GM23248 (cell line): ENCODE measurements at regions of chr14 and their contacts with region 1.

Region 1: DNA sequence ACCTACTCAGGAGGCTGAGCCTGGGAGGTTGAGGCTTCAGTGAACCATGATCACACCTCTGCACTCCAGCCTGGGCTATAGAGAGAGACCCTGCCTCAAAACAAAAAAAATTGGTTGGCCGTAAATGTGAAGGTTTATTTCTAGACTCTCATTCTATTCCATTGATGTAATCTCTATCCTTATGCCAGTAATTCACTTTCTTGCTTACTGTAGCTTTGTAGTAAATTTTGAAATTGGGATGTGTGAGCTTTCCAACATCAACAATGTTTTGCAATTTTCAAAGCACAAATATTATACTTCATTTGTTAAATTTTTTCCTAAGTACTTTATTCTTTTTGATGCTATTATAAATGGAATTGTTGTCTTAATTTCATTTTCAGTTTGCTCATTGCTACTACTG is 24.6 kb downstream of the LIN52 start:
- DNase-seq: no peak
- H3K4me3 ChIP-seq: no peak overlapping the region
- H3K27ac ChIP-seq: no peak overlapping the region
- H3K4me1 ChIP-seq: no peaks in the 10 kb centered on the region
- H3K27me3 ChIP-seq: no peaks in the 10 kb centered on the region

Region 2: DNA sequence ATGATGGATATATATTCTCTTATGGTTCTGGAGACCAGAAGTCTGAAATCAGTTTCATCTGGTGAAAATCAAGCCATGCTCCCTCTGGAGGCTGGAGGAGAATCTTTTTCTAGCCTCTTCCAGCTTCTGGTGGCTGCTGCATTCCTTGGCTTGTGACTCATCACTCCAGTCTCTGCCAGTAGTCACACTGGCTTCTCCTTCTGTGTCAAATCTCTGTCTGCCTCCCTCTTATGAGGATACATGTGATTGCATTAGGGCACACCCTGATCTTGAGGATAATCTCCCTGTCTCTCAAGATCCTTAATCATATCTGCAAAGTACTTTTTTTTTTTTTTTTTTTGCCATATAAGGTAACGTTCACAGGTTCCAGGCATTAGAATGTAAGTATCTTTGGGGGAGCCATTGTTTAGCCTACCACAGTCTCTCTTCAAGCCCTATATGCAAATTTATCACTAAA is 446.9 kb before region 1 on chr14:
- in situ Hi-C with region 1: no loop called
- DNase-seq: peak; percentile 96
- H3K4me3 ChIP-seq: no peak overlapping the region
- H3K27ac ChIP-seq: peak overlapping the region; percentile 36
- H3K4me1 ChIP-seq: peaks cover 13% of the 10 kb centered on the region
- H3K27me3 ChIP-seq: no peaks in the 10 kb centered on the region

Region 3: DNA sequence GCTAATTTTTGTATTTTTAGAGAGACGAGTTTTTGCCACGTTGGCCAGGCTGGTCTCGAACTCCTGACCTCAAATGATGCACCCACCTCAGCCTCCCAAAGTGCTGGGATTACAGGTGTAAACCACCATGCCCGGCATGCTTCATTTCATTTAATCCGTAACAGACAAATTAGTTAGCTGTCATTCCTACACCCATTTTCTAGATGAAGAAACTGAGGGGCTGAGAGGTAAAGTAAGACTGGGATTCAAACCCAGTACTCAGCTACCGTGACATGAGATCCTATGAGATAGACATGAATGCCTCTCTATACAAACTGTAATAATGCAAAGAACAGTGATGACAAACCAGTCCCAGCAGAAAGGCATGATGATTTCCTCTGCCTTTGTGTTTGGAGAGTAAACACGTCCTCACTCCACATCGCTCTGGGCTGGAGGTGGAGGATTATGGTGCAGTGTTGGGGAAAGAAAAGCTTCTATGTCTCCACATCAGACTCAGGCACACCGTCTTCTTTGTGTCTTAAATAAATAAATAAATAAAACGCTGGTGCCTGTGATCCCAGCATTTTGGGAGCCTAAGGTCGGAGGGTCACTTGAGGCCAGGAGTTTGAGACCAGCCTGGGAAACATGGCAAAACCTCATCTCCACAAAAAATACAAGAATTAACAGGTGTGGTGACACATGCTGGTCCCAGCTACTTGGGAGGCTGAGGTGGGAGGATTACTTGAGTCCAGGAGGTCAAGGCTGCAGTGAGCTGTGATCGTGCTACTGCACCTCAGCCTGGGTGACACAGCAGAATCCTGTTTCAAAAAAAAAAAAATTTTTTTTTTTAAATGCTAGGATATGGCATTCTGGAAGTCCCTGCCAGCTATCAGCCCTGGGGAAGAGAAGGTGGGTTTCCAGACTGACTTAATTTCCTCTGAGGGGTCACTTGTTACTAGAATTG is 140.3 kb after region 1 on chr14:
- in situ Hi-C with region 1: loop called (anchors 5 kb)
- DNase-seq: no peak
- H3K4me3 ChIP-seq: no peak overlapping the region
- H3K27ac ChIP-seq: no peak overlapping the region
- H3K4me1 ChIP-seq: no peaks in the 10 kb centered on the region
- H3K27me3 ChIP-seq: peaks cover 37% of the 10 kb centered on the region

Region 4: DNA sequence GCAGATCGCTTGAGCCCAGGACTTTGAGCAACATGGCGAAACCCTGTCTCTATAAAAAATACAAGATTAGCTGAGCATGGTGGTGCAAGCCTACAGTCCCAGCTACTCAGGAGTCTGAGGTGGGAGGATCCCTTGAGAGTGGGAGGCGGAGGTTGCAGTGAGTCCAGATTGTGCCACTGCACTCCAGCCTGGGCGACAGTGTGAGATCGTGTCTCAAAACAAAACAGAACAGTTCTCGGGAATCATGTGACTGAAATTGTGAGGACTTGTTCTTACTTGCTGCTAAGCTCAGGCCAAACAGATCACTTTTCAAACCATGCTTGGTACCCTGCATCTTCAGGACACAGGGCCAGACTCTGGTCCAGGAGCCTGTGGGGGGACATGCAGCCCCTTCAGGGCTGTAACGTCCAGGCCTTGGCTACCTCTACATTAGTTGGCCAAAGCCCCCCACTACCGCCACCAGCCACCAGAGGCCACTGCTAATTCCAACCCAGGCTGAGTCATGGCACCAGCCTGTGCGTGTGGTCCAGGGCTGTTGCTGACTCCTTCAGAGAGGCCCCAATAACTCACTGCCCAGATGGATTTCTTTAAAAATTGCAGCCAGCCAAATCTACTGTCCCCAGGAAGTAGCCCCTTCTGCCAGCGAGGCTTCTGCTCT is 350.0 kb after region 1 on chr14:
- in situ Hi-C with region 1: loop called (anchors 25 kb)
- DNase-seq: peak; percentile 93
- H3K4me3 ChIP-seq: no peak overlapping the region
- H3K27ac ChIP-seq: no peak overlapping the region
- H3K4me1 ChIP-seq: peaks cover 4% of the 10 kb centered on the region; the same call in 1 of the 2 replicates
- H3K27me3 ChIP-seq: peaks cover 12% of the 10 kb centered on the region; the same call in 1 of the 2 replicates